Activated T-helper 1 cell treated with anti-CD3 and anti-CD28 coated beads, Interleukin-12 subunit alpha, Interleukin-12 subunit beta, Interleukin-2, Interleukin-4 antibody, amounts not matched to agents 30 ng/mL and 10 ng/mL and 1 ng/mL, durations not matched to agents 14 hours and 24 hours and 36 hours (primary cell): ENCODE measurements at regions of chr4 and their contacts with region 1.

Region 1: DNA sequence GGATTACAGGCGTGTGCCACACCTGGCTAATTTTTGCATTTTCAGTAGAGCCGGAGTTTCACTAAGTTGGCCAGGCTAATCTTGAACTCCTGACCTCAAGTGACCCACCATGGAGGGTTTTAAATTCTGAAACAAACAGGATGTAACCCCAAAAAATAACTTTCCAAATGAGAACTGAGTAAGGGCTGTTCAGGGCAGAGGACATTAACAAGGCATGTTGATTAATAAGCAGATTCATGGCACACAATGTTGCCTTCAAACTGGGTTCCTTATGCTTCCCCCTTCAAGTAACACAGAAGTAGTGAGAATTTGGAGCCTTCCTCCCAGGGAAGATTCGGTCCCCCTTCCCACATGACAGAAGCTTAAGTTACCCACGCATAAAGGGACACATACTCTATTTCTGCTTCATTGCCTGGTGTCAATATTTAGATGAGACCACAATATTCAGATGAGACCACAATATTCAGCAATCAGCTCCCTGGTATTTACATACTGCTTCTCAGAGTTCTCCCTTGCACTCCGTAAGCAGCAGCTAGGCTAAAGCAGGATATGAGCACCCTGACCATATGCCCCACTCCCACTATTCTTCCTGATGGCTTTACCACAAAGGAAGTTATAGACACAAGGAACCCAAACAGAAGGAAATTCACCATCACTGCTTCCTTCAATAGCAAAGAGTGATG is 21.4 kb downstream of the GRSF1 start:
- DNase-seq: no peak
- H3K4me3 Mint-ChIP-seq: no peak overlapping the region
- H3K27ac Mint-ChIP-seq: no peak overlapping the region
- H3K4me1 Mint-ChIP-seq: peaks cover 8% of the 10 kb centered on the region
- H3K27me3 Mint-ChIP-seq: no peaks in the 10 kb centered on the region

Region 2: DNA sequence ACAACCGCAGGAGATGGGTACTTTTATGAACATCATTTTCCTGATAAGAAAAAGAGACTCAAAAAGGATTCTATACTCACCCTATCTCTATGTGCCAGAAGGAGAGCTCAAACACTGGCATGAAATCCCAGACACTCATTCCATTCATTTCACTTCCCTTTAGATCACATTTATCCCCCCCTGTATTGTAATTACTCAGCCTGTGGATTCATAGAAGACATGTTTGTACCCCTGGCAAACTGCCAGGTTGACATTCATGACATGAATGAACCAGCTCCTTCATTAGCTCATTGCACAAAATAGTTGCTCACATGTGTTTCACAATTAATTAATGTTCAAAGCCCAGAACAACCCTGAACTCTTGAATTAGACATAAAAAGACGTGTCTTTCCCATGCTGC is 452.8 kb before region 1 on chr4:
- intact Hi-C with region 1: no loop called
- DNase-seq: no peak
- H3K4me3 Mint-ChIP-seq: no peak overlapping the region
- H3K27ac Mint-ChIP-seq: no peak overlapping the region
- H3K4me1 Mint-ChIP-seq: no peaks in the 10 kb centered on the region
- H3K27me3 Mint-ChIP-seq: no peaks in the 10 kb centered on the region

Region 3: GRCh38 chr4:70868778-70869177 is 50.5 kb after region 1 on chr4:
- intact Hi-C with region 1: loop called (anchors 1 kb)
- DNase-seq: no peak
- H3K4me3 Mint-ChIP-seq: no peak overlapping the region
- H3K27ac Mint-ChIP-seq: no peak overlapping the region
- H3K4me1 Mint-ChIP-seq: peaks cover 3% of the 10 kb centered on the region
- H3K27me3 Mint-ChIP-seq: peaks cover 11% of the 10 kb centered on the region